ENCODE measurements at regions of chr2 and their contacts with region 1.

Region 1: GRCh38 chr2:108448678-108449493 is at the start of gene GCC2:
- DNase-seq: peak; percentile 95
- H3K4me3 Mint-ChIP-seq: peak within 1 kb of the TSS; percentile 91
- H3K27ac Mint-ChIP-seq: peak within 1 kb of the TSS; percentile 85
- H3K4me1 Mint-ChIP-seq: peaks cover 44% of the 10 kb centered on the region
- H3K27me3 Mint-ChIP-seq: no peaks in the 10 kb centered on the region
- total RNA-seq, gene GCC2: 43.7 and 44.1 TPM in 2 replicates

Region 2: GRCh38 chr2:107669335-107669734 is 779.6 kb before region 1 on chr2:
- intact Hi-C with region 1: no loop called
- DNase-seq: no peak
- H3K4me3 Mint-ChIP-seq: no peak overlapping the region
- H3K27ac Mint-ChIP-seq: no peak overlapping the region
- H3K4me1 Mint-ChIP-seq: no peaks in the 10 kb centered on the region
- H3K27me3 Mint-ChIP-seq: no peaks in the 10 kb centered on the region

Region 3: DNA sequence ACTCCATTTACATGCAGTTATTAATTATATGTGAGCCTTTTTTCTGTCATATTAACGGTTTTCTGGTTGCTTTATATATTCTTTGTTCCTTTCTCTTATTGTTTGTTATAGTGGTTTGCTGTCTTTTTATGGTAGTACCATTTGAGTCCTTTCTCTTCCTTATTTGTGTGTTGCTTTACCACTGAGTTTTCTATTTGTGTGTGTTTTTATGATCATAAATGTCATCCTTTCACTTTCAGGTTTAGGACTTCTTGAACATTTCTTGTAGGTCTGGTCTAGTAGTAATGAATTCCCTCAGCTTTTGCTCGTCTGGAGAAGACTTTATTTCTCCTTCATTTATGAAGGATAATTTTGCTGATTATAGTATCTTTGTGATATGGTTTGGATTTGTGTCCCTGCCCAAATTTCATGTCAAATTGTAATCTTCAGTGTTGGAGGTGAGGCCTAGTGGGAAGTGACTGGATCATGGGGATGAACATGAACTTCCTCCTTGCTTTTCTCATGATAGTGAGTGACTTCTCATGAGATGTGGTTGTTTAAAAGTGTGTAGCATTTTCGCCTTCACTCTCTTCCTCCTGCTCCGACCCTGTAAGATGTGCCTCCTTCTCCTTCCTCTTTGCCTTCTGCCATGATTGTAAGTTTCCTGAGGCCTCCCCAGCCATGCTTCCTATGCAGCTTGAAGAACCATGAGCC is 11.6 kb after region 1 on chr2:
- intact Hi-C with region 1: loop called (anchors 1 kb)
- DNase-seq: no peak
- H3K4me3 Mint-ChIP-seq: no peak overlapping the region
- H3K27ac Mint-ChIP-seq: peak overlapping the region; percentile 28
- H3K4me1 Mint-ChIP-seq: peaks cover 40% of the 10 kb centered on the region
- H3K27me3 Mint-ChIP-seq: no peaks in the 10 kb centered on the region

Region 4: DNA sequence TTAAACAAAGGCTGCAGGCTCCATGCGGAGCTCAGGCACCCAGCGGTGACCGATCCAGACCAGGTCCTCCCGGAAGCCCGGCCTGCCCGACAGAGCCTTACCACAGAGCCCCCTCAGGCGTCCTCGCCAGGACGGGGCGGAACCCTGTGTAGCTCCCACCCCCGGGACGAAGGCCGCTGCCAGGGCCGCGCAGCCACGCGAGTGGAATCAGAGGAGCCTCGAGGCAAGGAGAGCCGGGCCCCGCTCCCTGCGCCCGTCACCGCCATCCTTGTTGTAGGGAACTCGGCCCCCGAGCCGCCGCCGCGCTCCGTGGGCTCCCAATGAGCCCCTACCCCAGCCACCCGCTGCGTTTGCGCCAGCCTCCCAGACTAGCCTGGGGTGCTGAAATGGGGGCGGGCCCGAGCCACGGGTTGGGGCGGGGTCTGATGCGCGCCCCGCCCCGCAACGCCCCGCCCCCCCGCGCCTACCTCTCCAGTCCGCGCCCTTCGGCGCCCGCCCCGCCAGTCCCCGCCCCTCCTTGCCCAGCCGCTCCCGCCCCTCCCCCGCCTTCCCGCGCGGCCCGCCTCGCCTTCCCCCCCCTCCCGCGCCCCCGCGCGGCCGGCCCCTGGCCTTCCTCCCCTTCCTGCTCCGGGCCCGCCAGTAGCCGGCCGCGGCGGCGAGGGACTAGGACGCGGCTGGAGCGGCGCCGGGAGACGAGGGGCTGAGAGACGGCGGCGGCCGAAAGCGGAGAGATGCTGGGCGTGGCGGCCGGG is 85.1 kb after region 1 on chr2 and contains the start of gene LIMS1:
- intact Hi-C with region 1: loop called (anchors 1 kb)
- DNase-seq: peak; percentile 76
- H3K4me3 Mint-ChIP-seq: peak within 1 kb of the TSS; percentile 96
- H3K27ac Mint-ChIP-seq: peak within 1 kb of the TSS; percentile 97
- H3K4me1 Mint-ChIP-seq: peaks cover 65% of the 10 kb centered on the region
- H3K27me3 Mint-ChIP-seq: peaks cover 2% of the 10 kb centered on the region
- total RNA-seq, gene LIMS1: 69.6 and 70.0 TPM in 2 replicates

Region 5: GRCh38 chr2:108719149-108720044 is 270.5 kb after region 1 on chr2 and contains the start of gene RANBP2:
- intact Hi-C with region 1: loop called (anchors 1 kb)
- DNase-seq: peak; percentile 92
- H3K4me3 Mint-ChIP-seq: peak within 1 kb of the TSS; percentile 94
- H3K27ac Mint-ChIP-seq: peak within 1 kb of the TSS; percentile 99
- H3K4me1 Mint-ChIP-seq: peaks cover 16% of the 10 kb centered on the region
- H3K27me3 Mint-ChIP-seq: no peaks in the 10 kb centered on the region
- total RNA-seq, gene RANBP2: 68.0 and 74.1 TPM in 2 replicates

Region 6: DNA sequence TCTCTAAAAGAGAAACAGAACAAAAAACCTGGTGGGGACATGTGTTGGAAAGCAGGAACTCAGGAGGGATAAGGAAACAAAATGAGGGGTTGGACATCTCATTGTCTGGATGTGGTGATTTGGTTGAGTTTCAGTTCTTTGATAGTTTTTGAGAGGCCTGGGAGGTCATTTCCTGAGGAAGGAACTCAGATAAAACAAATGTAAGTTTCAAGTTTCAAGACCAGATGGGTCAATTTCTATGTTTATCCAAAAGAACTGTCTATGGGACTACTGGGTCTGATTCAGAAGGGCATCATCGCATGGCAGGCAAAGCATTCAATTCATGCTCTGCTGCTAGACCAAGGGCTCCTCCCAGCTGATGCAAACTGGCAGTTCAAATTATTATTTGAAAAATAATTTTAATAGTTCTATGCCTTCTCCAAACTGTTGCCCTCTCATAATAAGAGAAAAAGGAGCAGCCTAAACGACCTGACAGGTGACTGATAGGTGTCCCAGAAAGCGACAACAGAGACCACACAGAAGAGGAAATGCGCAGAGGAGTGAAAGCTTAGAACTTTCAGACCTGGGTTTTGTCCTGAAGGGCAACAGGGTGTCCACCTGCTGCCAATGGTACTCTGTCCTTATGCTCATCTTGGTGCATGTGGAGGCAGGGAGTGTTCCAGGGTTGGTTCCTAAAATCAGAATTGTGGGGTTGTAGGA is 640.9 kb after region 1 on chr2:
- intact Hi-C with region 1: no loop called
- DNase-seq: no peak
- H3K4me3 Mint-ChIP-seq: no peak overlapping the region
- H3K27ac Mint-ChIP-seq: no peak overlapping the region
- H3K4me1 Mint-ChIP-seq: no peaks in the 10 kb centered on the region
- H3K27me3 Mint-ChIP-seq: peaks cover 3% of the 10 kb centered on the region

Region 7: GRCh38 chr2:109613922-109614714 is 1165.2 kb after region 1 on chr2 and contains the starts of genes SEPTIN10 and SOWAHC:
- intact Hi-C with region 1: loop called (anchors 1 kb)
- DNase-seq: peak; percentile 72
- H3K4me3 Mint-ChIP-seq: peak within 1 kb of the TSS; percentile 80
- H3K27ac Mint-ChIP-seq: peak within 1 kb of the TSS; percentile 75
- H3K4me1 Mint-ChIP-seq: peaks cover 8% of the 10 kb centered on the region
- H3K27me3 Mint-ChIP-seq: peaks cover 64% of the 10 kb centered on the region
- total RNA-seq, gene SEPTIN10: 0.13 and 0.66 TPM in 2 replicates
- total RNA-seq, gene SOWAHC: 0.24 and 0.31 TPM in 2 replicates

Region 8: GRCh38 chr2:110204780-110205385 is 1756.0 kb after region 1 on chr2 and contains the start of gene NPHP1:
- intact Hi-C with region 1: loop called (anchors 10 kb)
- DNase-seq: peak; percentile 83
- H3K4me3 Mint-ChIP-seq: peak within 1 kb of the TSS; percentile 90
- H3K27ac Mint-ChIP-seq: peak within 1 kb of the TSS; percentile 95
- H3K4me1 Mint-ChIP-seq: peaks cover 18% of the 10 kb centered on the region
- H3K27me3 Mint-ChIP-seq: no peaks in the 10 kb centered on the region
- total RNA-seq, gene NPHP1: 0.12 and 0.70 TPM in 2 replicates

Measured in activated T-helper 1 cell treated with anti-CD3 and anti-CD28 coated beads, Interleukin-12 subunit alpha, Interleukin-12 subunit beta, Interleukin-2, Interleukin-4 antibody, amounts not matched to agents 30 ng/mL and 10 ng/mL and 1 ng/mL, durations not matched to agents 14 hours and 24 hours and 36 hours (primary cell).